ENCODE measurements at regions of chrX and their contacts with region 1.

Region 1: DNA sequence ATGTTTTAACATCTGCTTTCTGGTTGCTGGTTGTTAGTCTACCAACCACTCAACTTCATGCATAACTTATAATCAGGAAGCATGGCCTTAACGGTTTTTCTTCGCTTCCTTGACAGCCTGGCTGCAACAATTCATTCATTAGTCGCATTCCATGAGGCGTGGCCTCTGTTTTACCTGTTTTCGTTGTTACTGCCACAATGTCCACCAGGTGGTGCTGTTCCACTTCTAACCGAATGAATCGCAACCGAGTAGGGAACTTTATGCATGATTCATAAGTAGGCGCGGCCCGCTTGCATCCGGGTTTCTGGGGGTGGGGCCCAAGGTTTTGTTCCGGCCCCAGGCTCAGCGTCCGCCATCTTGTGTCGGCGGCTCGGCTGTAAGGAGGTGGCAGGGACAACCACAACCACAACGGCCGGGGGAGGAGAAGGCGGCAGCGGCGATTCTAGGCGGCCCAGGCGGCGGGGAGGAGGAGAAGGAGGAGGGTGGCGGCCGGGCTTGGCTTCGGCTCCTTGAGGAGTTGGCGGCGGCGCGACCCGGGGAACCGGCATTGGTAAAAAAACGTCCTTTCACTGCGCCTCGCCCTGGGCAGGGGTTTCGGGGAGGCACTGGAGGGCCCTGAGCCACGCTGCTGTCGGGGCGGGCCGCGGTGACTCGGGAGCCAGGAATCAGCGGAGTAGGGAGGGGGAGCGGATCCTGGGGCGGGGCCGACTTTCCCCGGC is at the start of gene UBA1:
- DNase-seq: peak; percentile 94
- ATAC-seq: peak; percentile 72
- H3K4me3 Mint-ChIP-seq: peak within 1 kb of the TSS; percentile 87
- H3K27ac Mint-ChIP-seq: peak within 1 kb of the TSS; percentile 94
- H3K4me1 Mint-ChIP-seq: peaks cover 45% of the 10 kb centered on the region
- H3K27me3 Mint-ChIP-seq: no peaks in the 10 kb centered on the region
- CTCF ChIP-seq: peak; percentile 61
- total RNA-seq, gene UBA1: 243 to 246 TPM

Region 2: DNA sequence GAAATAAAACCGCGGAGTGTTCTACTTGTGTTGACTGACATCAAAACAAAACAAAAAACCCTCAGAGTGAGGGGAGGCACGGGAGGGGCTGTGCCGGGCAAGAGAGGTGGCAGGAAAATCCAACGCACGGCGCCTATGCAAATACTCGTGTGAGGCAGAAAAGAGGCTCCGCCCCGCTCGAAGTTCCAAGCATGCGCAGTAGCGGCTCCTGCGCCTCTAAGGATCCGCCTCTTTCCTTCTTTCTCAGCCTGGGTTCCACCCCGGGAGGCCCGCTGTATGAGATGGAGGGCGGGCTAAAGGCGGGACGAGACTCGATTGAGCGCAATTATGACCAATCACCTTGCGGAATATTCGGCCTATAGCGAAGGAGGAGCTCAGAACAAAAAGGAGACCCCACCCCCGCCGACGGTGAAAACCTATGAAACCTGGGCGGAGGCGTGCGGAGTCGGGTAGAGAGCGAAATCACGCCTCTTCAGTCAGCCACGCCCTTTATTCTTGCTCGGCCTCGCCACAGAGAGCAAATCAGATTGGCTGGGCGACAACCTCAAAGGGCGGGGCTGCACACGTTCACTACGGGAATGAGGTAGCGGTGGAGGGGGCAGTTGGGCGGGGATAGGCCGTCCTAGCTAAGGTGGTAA is 24.1 kb after region 1 on chrX:
- CTCF ChIA-PET with region 1: no interaction called
- POLR2A ChIA-PET with region 1: interaction called, 10 read pairs
- intact Hi-C with region 1: no loop called
- DNase-seq: peak; percentile 98
- ATAC-seq: peak; percentile 87
- H3K4me3 Mint-ChIP-seq: peak overlapping the region; percentile 88
- H3K27ac Mint-ChIP-seq: peak overlapping the region; percentile 99
- H3K4me1 Mint-ChIP-seq: peaks cover 43% of the 10 kb centered on the region
- H3K27me3 Mint-ChIP-seq: no peaks in the 10 kb centered on the region
- CTCF ChIP-seq: no peak

Region 3: DNA sequence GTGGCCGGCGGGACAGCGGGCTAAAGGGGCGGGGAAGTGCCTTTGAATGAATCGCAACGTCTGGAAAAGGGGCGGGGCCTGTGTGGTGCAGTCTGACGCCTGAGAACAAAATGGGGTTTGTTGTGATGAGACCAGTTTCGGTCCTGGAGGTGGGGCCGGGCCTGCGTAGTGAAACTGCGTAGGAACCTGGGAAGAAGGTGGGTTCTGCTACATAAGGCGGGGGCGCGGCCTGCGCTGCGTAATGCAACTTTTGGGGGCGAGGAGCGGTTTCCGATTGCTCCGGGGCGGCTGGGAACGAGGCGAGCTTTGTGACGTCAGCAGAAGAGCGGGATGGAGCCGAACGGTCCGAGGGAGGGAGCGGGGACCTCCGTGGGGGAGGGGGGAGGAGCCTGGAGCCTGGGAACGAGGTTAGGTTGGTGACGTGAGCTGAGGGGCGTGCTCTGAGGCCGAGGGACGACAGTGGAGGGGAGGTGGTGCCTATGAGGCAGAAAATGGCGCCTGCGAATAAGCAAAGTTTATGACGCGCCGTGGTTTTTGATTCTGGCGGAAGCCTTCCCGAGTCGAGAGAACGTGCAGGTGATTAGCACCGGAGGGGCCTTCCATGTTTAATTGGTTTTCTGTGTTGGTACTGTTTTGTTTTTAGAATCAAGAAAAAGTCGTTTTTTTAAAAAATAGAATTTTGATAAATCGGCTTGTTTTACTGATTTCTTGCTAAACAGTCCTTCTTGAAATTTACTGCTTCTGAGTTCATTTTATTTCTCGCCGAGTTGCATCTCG is 39.9 kb after region 1 on chrX:
- CTCF ChIA-PET with region 1: no interaction called
- POLR2A ChIA-PET with region 1: interaction called, 9 read pairs
- intact Hi-C with region 1: loop called (anchors 2 kb)
- DNase-seq: peak; percentile 96
- ATAC-seq: peak; percentile 94
- H3K4me3 Mint-ChIP-seq: peak overlapping the region; percentile 89
- H3K27ac Mint-ChIP-seq: peak overlapping the region; percentile 97
- H3K4me1 Mint-ChIP-seq: peaks cover 26% of the 10 kb centered on the region
- H3K27me3 Mint-ChIP-seq: no peaks in the 10 kb centered on the region
- CTCF ChIP-seq: no peak

Region 4: DNA sequence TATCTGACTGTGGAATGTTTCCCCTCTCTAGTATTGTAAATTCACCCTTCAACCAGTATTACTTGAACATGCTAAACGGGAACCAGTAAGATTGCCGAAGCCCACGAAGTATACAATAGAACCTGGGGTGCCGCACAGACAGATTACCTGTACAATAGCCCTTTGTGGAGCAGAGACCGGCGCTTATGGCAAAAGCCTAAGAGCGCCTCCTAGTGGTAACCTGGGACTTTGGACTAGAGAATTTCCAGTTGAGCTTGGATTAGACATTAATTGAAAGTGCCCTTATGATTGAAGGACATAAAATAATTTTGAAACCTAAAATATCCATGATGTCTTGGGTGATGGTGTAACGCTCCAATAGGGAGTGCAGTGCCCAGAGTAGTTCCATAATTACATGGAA is 190.9 kb after region 1 on chrX:
- CTCF ChIA-PET with region 1: interaction called, 6 read pairs
- POLR2A ChIA-PET with region 1: interaction called, 8 read pairs
- intact Hi-C with region 1: loop called (anchors 1 kb)
- DNase-seq: peak; percentile 78
- ATAC-seq: peak; percentile 48
- H3K4me3 Mint-ChIP-seq: no peak overlapping the region
- H3K27ac Mint-ChIP-seq: no peak overlapping the region
- H3K4me1 Mint-ChIP-seq: peaks cover 17% of the 10 kb centered on the region
- H3K27me3 Mint-ChIP-seq: no peaks in the 10 kb centered on the region
- CTCF ChIP-seq: peak; percentile 74

Region 5: GRCh38 chrX:47523297-47523696 is 329.7 kb after region 1 on chrX:
- CTCF ChIA-PET with region 1: interaction called, 8 read pairs
- POLR2A ChIA-PET with region 1: interaction called, 4 read pairs
- intact Hi-C with region 1: loop called (anchors 5 kb)
- DNase-seq: peak; percentile 80
- ATAC-seq: peak; percentile 100
- H3K4me3 Mint-ChIP-seq: peak overlapping the region; percentile 64
- H3K27ac Mint-ChIP-seq: no peak overlapping the region
- H3K4me1 Mint-ChIP-seq: no peaks in the 10 kb centered on the region
- H3K27me3 Mint-ChIP-seq: no peaks in the 10 kb centered on the region
- CTCF ChIP-seq: peak; percentile 67

Measured in activated CD8-positive, alpha-beta T cell treated with anti-CD3 and anti-CD28 coated beads for 36 hours (primary cell).